OCI-LY7 (cell line): ENCODE measurements at regions of chr9 and their contacts with region 1.

Region 1: GRCh38 chr9:33233681-33234473 is 6.1 kb upstream of the SPINK4 start:
- DNase-seq: no peak
- H3K4me3 ChIP-seq: no peak overlapping the region
- H3K27ac ChIP-seq: no peak overlapping the region
- H3K4me1 ChIP-seq: peaks cover 2% of the 10 kb centered on the region
- CTCF ChIP-seq: no peak

Region 2: GRCh38 chr9:33029106-33029788 is 204.6 kb before region 1 on chr9:
- CTCF ChIA-PET with region 1: no interaction called
- POLR2A ChIA-PET with region 1: no interaction called
- intact Hi-C with region 1: no loop called
- DNase-seq: no peak
- H3K4me3 ChIP-seq: no peak overlapping the region
- H3K27ac ChIP-seq: no peak overlapping the region
- H3K4me1 ChIP-seq: peaks cover 32% of the 10 kb centered on the region
- CTCF ChIP-seq: no peak

Region 3: DNA sequence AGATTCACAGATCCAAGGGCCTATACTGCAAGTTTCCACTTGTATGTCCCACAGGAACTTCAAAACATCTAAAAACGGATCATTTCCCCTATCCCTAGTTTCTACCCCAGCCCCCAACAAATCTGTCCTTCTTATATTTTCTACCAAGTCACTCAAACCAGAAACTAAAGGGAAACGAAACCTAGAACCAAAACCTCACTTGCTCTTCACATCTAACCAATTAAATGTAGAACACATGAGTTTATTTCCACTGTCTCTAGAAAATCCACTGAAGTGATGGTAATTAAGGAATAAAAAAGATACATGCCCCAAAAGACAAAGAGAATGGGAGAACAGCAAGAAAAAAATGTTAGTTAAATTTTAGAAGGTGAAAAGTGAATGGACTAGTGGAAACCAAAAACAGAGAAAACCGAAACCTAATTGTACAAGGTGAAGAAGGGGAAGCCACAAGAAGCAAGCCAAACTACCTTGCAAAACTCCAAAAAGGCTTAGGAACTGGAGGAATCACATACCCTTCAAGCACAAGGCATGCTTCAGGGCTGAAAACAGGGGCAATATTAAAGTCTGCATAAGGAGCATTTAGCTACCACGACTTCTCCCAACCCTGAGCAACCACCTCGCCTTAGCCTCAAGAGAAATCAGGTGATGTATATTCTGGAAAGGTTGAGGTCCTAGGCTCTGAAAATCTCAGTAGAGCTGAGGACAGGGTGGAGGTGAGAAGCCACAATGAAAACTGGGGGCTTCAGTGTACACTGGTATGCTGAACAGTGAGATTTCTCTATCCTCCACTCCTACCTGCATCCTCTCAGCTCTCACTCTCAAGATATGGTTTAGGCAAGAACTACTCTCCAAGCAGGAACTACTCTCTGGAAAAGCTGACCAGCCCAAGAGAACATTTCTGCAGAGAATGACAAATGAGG is 168.5 kb before region 1 on chr9:
- CTCF ChIA-PET with region 1: no interaction called
- POLR2A ChIA-PET with region 1: interaction called, 11 read pairs
- intact Hi-C with region 1: no loop called
- DNase-seq: peak; percentile 35
- H3K4me3 ChIP-seq: no peak overlapping the region
- H3K27ac ChIP-seq: peak overlapping the region; percentile 63
- H3K4me1 ChIP-seq: peaks cover 16% of the 10 kb centered on the region
- CTCF ChIP-seq: no peak

Region 4: GRCh38 chr9:33187519-33188218 is 46.2 kb before region 1 on chr9:
- CTCF ChIA-PET with region 1: no interaction called
- POLR2A ChIA-PET with region 1: no interaction called
- intact Hi-C with region 1: no loop called
- DNase-seq: no peak
- H3K4me3 ChIP-seq: no peak overlapping the region
- H3K27ac ChIP-seq: no peak overlapping the region
- H3K4me1 ChIP-seq: peaks cover 7% of the 10 kb centered on the region
- CTCF ChIP-seq: no peak